PC-3 (cell line): ENCODE measurements at regions of chr13 and their contacts with region 1.

Region 1: GRCh38 chr13:21638319-21639282 is 32.3 kb upstream of the FGF9 start:
- DNase-seq: peak; percentile 64
- ATAC-seq: peak; percentile 10
- H3K4me3 ChIP-seq: no peak overlapping the region
- H3K27ac ChIP-seq: no peak overlapping the region
- H3K4me1 ChIP-seq: peaks cover 22% of the 10 kb centered on the region
- H3K27me3 ChIP-seq: 0 out of 2 replicates have a peak, but pooled peaks cover 6% of the 10 kb centered on the region
- CTCF ChIP-seq: peak; percentile 78

Region 2: DNA sequence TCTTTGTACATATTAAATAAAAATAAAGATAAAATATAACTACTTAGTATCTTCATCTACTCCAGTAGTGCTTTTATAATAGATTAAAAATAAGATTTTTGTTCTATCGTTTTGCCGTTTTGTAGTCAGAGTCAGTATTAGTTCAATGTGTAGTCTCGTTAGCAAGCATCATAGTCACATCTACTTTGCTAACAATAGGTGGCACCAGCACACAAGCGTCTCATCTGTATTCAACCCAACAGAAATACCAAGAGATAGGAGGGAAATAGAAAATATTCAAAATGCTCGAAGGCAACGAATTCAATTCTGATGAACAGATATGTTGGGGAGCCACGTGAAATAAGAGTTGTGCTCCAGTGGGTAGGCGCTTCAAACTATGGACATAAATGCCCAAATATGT is 13.2 kb before region 1 on chr13:
- CTCF ChIA-PET with region 1: interaction called, 10 read pairs
- POLR2A ChIA-PET with region 1: no interaction called
- intact Hi-C with region 1: no loop called
- DNase-seq: peak; percentile 59
- ATAC-seq: peak; percentile 94
- H3K4me3 ChIP-seq: no peak overlapping the region
- H3K27ac ChIP-seq: no peak overlapping the region
- H3K4me1 ChIP-seq: no peaks in the 10 kb centered on the region
- H3K27me3 ChIP-seq: peaks cover 21% of the 10 kb centered on the region
- CTCF ChIP-seq: peak; percentile 79

Region 3: DNA sequence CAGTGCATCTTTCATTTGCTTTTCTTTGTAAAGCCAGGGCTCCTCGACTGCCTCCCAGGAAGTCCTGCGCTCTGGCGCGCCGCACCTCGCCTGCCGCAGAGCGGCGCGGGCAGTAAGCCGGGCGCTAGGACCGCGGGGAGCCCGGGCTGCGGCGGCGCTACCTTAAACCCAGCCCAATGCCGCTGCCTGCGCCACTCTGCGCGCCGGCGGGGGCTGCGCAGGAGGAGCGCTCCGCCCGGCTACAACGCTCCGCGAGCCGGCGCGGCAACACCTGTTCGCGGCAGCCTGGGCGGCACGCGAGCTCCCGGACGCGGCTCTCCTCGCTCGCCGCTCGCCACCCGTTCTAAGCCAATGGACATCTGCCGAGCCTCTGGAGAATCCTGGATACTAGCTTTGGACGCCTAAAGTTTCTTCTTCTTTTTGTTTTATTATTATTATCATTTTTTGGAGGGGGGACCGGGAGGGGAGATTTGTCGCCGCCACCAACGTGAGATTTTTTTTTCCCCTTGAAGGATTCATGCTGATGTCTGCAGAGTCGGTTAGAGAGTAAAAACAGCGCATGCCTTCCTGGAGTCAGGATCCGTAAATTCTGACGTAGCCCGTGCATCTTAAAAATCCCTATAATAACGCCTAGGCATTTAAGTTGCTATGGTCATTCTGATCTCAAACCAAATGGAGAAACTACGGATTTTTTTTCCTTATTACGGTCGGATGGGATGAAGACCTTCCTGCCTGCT is 32.5 kb after region 1 on chr13 and contains the start of gene FGF9:
- CTCF ChIA-PET with region 1: interaction called, 4 read pairs
- POLR2A ChIA-PET with region 1: no interaction called
- intact Hi-C with region 1: loop called (anchors 2 kb)
- DNase-seq: peak; percentile 65
- ATAC-seq: peak; percentile 90
- H3K4me3 ChIP-seq: peak within 1 kb of the TSS; percentile 64
- H3K27ac ChIP-seq: no peak within 1 kb of the TSS
- H3K4me1 ChIP-seq: no peaks in the 10 kb centered on the region
- H3K27me3 ChIP-seq: peaks cover 66% of the 10 kb centered on the region
- CTCF ChIP-seq: no peak
- total RNA-seq, gene FGF9: not detected in 2 replicates

Region 4: GRCh38 chr13:21759463-21759862 is 120.9 kb after region 1 on chr13:
- CTCF ChIA-PET with region 1: interaction called, 11 read pairs
- POLR2A ChIA-PET with region 1: no interaction called
- intact Hi-C with region 1: no loop called
- DNase-seq: no peak
- ATAC-seq: no peak
- H3K4me3 ChIP-seq: no peak overlapping the region
- H3K27ac ChIP-seq: no peak overlapping the region
- H3K4me1 ChIP-seq: no peaks in the 10 kb centered on the region
- H3K27me3 ChIP-seq: peaks cover 42% of the 10 kb centered on the region
- CTCF ChIP-seq: no peak

Region 5: DNA sequence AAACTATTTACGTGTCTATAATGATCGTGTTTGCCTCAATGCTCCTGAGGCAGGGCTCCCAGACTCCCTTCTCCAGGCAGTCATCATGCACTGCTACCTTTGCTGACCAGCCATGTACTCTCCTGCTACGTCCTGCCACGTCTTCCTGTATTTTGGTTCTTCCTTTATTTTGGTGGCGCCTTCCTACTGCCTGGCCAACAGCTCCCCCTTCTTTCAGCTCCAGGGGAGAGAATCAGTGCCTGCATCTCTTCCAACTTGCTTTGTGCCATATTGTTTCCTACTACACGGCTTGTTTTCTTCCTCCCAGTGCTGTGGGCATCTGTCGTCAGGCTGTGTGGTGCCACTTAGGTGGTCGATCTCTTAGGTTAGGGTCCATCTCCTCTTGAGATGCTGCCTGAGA is 128.4 kb after region 1 on chr13:
- CTCF ChIA-PET with region 1: interaction called, 11 read pairs
- POLR2A ChIA-PET with region 1: no interaction called
- intact Hi-C with region 1: loop called (anchors 5 kb)
- DNase-seq: no peak
- ATAC-seq: no peak
- H3K4me3 ChIP-seq: no peak overlapping the region
- H3K27ac ChIP-seq: no peak overlapping the region
- H3K4me1 ChIP-seq: no peaks in the 10 kb centered on the region
- H3K27me3 ChIP-seq: peaks cover 34% of the 10 kb centered on the region
- CTCF ChIP-seq: no peak

Region 6: DNA sequence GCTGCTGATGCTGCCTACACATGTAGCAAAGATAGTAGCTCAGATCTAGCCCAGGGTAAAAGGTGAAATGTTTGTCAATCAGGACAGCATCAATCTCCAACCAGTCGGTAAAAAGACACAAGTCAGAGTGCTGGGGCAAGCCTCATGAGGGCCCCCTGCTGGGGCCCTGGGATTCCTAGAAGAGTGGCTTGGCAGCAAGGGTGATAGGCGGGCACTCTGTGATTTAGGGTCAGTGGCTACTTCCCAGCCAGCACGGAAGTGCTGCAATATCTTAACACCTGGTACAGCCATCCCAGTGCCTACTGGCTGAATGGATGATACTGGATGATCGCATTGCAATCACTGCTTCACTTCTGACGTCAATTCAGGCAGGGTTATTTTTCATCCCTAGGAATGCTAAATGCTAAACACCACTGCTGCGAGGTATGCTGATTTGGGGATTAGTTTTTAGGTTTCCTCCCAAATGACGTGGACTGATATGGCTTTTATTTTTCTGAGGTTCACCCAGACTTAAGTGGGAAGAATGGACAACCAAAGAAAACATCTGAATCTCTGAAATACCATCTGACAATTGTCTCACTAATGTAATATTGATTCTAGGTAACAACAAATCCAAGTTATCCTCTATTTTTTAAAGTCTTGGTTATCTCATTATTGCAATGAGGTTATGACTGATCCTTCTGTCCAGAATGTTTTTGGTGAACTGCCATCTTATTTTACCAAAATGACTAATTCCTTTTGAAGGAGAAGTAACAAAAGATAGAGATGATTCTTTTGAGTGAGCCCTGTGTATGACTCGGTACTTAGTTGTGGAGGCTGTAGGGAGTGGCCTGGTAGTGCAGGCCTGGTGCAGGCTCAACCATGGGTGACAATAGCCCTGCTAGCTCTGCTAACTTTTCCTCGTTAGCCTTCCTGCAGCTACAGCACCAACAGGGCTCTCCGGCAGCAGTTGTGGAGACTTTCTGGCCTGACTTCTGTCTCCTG is 464.7 kb after region 1 on chr13:
- CTCF ChIA-PET with region 1: no interaction called
- POLR2A ChIA-PET with region 1: no interaction called
- intact Hi-C with region 1: loop called (anchors 10 kb)
- DNase-seq: no peak
- ATAC-seq: no peak
- H3K4me3 ChIP-seq: no peak overlapping the region
- H3K27ac ChIP-seq: no peak overlapping the region
- H3K4me1 ChIP-seq: peaks cover 12% of the 10 kb centered on the region
- H3K27me3 ChIP-seq: no peaks in the 10 kb centered on the region
- CTCF ChIP-seq: no peak

Region 7: DNA sequence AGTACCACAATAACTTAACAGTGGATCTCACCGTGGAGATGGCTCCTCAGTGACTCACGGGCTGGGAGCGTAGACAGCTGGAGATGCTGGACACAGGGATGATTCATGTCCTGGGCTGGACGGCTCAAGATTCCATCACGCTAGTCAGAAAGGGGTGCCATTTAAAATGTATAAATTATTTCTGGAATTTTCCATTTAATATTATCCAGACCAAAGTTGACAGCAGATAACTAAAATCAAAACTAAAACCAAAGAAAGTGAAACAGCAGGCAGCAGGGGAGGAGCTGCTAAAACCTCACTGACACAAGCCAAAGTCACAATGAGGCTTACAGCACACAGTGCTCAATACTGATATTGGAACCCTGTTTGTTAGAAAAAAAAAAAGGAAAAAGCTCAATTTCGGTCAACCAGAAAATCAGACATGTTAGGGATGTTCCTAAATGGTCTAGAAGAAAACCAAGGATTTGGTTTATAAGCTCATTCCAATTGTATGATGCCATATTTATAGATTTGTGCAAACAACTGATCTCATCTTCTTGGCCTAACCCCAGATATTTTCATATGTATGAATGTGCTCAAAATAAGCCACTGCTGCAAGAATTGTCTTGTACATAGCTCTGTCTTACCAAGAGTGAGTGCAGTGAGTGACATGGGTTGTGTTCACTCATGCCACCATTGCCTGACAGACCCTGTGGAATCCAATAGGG is 1683.1 kb after region 1 on chr13:
- CTCF ChIA-PET with region 1: no interaction called
- POLR2A ChIA-PET with region 1: no interaction called
- intact Hi-C with region 1: loop called (anchors 5 kb)
- DNase-seq: peak; percentile 93
- ATAC-seq: peak; percentile 90
- H3K4me3 ChIP-seq: peak overlapping the region; percentile 59
- H3K27ac ChIP-seq: peak overlapping the region; percentile 96
- H3K4me1 ChIP-seq: peaks cover 48% of the 10 kb centered on the region
- H3K27me3 ChIP-seq: no peaks in the 10 kb centered on the region
- CTCF ChIP-seq: no peak